Activated CD4-positive, alpha-beta T cell treated with anti-CD3 and anti-CD28 coated beads for 36 hours (primary cell): ENCODE measurements at regions of chr9 and their contacts with region 1.

Region 1: DNA sequence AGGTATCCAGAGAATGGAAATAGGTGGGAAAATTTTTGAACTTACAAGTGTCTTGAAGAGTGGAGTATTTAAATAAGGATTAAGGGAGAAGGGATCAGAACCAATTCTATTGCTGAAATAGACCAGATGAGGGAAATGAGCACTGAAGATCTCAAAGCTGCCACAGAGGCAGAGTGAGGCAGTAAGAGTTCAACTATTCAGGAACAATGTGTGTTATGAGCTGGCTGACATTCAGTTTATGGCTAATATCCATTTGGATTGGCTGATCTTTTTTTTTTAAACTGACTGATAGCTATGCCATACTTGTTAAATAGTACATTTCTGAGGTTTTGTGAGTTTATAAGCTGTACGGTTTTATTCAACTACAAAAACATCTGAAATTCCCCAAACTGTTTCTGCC is 95.3 kb upstream of the GNA14 start:
- DNase-seq: no peak
- ATAC-seq: no peak
- H3K4me3 Mint-ChIP-seq: no peak overlapping the region
- H3K27ac Mint-ChIP-seq: no peak overlapping the region
- H3K4me1 Mint-ChIP-seq: peaks cover 61% of the 10 kb centered on the region
- H3K27me3 Mint-ChIP-seq: no peaks in the 10 kb centered on the region

Region 2: GRCh38 chr9:76866689-76867088 is 876.7 kb before region 1 on chr9:
- CTCF ChIA-PET with region 1: no interaction called
- POLR2A ChIA-PET with region 1: no interaction called
- intact Hi-C with region 1: no loop called
- DNase-seq: peak; percentile 6
- ATAC-seq: peak; percentile 23
- H3K4me3 Mint-ChIP-seq: no peak overlapping the region
- H3K27ac Mint-ChIP-seq: no peak overlapping the region
- H3K4me1 Mint-ChIP-seq: peaks cover 3% of the 10 kb centered on the region
- H3K27me3 Mint-ChIP-seq: peaks cover 6% of the 10 kb centered on the region

Region 3: DNA sequence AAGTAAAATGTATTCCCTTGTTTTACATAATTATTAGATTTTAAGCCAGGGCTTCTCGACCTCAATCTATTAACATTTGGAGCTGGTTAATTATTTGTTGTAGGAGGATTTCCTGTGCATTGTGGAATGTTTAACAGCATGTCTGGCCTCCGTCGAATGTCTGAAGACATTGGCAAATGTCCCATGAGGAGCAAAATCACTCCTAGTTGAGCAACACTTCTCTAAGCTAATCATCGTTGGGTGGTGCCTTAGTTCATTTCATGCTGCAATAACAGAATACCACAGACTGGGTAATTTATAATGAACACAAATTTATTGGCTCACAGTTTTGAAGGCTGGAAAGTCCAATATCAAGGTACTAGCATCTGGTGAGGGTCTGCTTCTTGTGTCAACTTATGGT is 579.5 kb before region 1 on chr9:
- CTCF ChIA-PET with region 1: no interaction called
- POLR2A ChIA-PET with region 1: no interaction called
- intact Hi-C with region 1: loop called in 1 of 2 experiments (anchors 5 kb)
- DNase-seq: no peak
- ATAC-seq: no peak
- H3K4me3 Mint-ChIP-seq: no peak overlapping the region
- H3K27ac Mint-ChIP-seq: no peak overlapping the region
- H3K4me1 Mint-ChIP-seq: peaks cover 1% of the 10 kb centered on the region
- H3K27me3 Mint-ChIP-seq: peaks cover 4% of the 10 kb centered on the region

Region 4: DNA sequence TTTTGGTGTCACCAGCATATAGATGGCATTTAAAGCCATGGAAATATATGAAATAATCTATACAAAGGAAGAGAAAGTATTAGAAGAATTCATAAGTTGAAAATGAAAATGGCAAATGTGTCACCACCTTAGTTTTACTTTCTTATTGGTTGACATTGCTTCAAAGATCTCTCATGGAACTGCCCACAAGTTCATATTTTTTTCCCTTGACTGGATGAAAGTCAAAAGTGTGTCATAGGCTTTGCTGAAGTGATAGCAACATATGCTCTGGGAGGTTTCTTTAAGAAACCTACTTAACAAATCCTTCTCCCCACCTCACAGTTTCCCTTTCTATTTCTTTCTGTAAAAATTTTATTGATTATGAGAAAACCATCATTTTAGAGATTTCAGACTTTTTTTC is 438.8 kb before region 1 on chr9:
- CTCF ChIA-PET with region 1: no interaction called
- POLR2A ChIA-PET with region 1: no interaction called
- intact Hi-C with region 1: loop called in 1 of 2 experiments (anchors 10 kb)
- DNase-seq: no peak
- ATAC-seq: peak; percentile 99
- H3K4me3 Mint-ChIP-seq: no peak overlapping the region
- H3K27ac Mint-ChIP-seq: no peak overlapping the region
- H3K4me1 Mint-ChIP-seq: peaks cover 13% of the 10 kb centered on the region
- H3K27me3 Mint-ChIP-seq: no peaks in the 10 kb centered on the region

Region 5: GRCh38 chr9:77712533-77713130 is 30.8 kb before region 1 on chr9:
- CTCF ChIA-PET with region 1: no interaction called
- POLR2A ChIA-PET with region 1: no interaction called
- intact Hi-C with region 1: loop called in 1 of 2 experiments (anchors 5 kb)
- DNase-seq: peak; percentile 35
- ATAC-seq: peak; percentile 92
- H3K4me3 Mint-ChIP-seq: no peak overlapping the region
- H3K27ac Mint-ChIP-seq: peak overlapping the region; percentile 37
- H3K4me1 Mint-ChIP-seq: peaks cover 30% of the 10 kb centered on the region
- H3K27me3 Mint-ChIP-seq: no peaks in the 10 kb centered on the region

Region 6: GRCh38 chr9:77725820-77726219 is 17.6 kb before region 1 on chr9:
- CTCF ChIA-PET with region 1: interaction called, 6 read pairs
- POLR2A ChIA-PET with region 1: interaction called, 5 read pairs
- intact Hi-C with region 1: loop called in 1 of 2 experiments (anchors 2 kb)
- DNase-seq: peak; percentile 69
- ATAC-seq: peak; percentile 79
- H3K4me3 Mint-ChIP-seq: peak overlapping the region; percentile 22
- H3K27ac Mint-ChIP-seq: peak overlapping the region; percentile 90
- H3K4me1 Mint-ChIP-seq: peaks cover 63% of the 10 kb centered on the region
- H3K27me3 Mint-ChIP-seq: no peaks in the 10 kb centered on the region

Region 7: GRCh38 chr9:77764894-77765780 is 21.8 kb after region 1 on chr9:
- CTCF ChIA-PET with region 1: no interaction called
- POLR2A ChIA-PET with region 1: no interaction called
- intact Hi-C with region 1: no loop called
- DNase-seq: no peak
- ATAC-seq: no peak
- H3K4me3 Mint-ChIP-seq: no peak overlapping the region
- H3K27ac Mint-ChIP-seq: no peak overlapping the region
- H3K4me1 Mint-ChIP-seq: peaks cover 10% of the 10 kb centered on the region
- H3K27me3 Mint-ChIP-seq: no peaks in the 10 kb centered on the region